HCT116 (cell line): ENCODE measurements at regions of chr11 and their contacts with region 1.

Region 1: GRCh38 chr11:66222358-66223149 is 45.9 kb upstream of the RAB1B start:
- DNase-seq: peak; percentile 88
- ATAC-seq: peak; percentile 96
- H3K4me3 ChIP-seq: no peak overlapping the region
- H3K27ac ChIP-seq: no peak overlapping the region
- H3K4me1 ChIP-seq: peaks cover 0 to 8% of the 10 kb centered on the region in 2 experiments; a peak in 1 of 4 replicates
- H3K27me3 ChIP-seq: no peaks in the 10 kb centered on the region
- CTCF ChIP-seq: peak; percentile 99 to 100 (median 100)
- POLR2A ChIP-seq: no peak
- RAD21 ChIP-seq: peak; percentile 95

Region 2: GRCh38 chr11:66051766-66052663 is 170.5 kb before region 1 on chr11 and contains the start of gene SF3B2:
- CTCF ChIA-PET with region 1: no interaction called
- POLR2A ChIA-PET with region 1: no interaction called
- RAD21 ChIA-PET with region 1: no interaction called
- intact Hi-C with region 1: no loop called
- DNase-seq: peak; percentile 96
- ATAC-seq: peak; percentile 99
- H3K4me3 ChIP-seq: peak within 1 kb of the TSS; percentile 79 to 100
- H3K27ac ChIP-seq: peak within 1 kb of the TSS; percentile 83
- H3K4me1 ChIP-seq: peaks cover 21% of the 10 kb centered on the region in 2 experiments
- H3K27me3 ChIP-seq: no peaks in the 10 kb centered on the region
- CTCF ChIP-seq: no peak
- POLR2A ChIP-seq: peak; percentile 22
- RAD21 ChIP-seq: no peak
- total RNA-seq, gene SF3B2: 300 TPM

Region 3: GRCh38 chr11:66258473-66258893 is 35.9 kb after region 1 on chr11:
- CTCF ChIA-PET with region 1: interaction called, 3 read pairs
- POLR2A ChIA-PET with region 1: no interaction called
- RAD21 ChIA-PET with region 1: no interaction called
- intact Hi-C with region 1: loop called (anchors 2 kb)
- DNase-seq: no peak
- ATAC-seq: peak; percentile 10
- H3K4me3 ChIP-seq: peak overlapping the region; percentile 94
- H3K27ac ChIP-seq: peak overlapping the region; percentile 68
- H3K4me1 ChIP-seq: peaks cover 10 to 20% of the 10 kb centered on the region in 2 experiments
- H3K27me3 ChIP-seq: no peaks in the 10 kb centered on the region
- CTCF ChIP-seq: no peak
- POLR2A ChIP-seq: no peak
- RAD21 ChIP-seq: no peak

Region 4: GRCh38 chr11:66275396-66275795 is 52.8 kb after region 1 on chr11:
- CTCF ChIA-PET with region 1: no interaction called
- POLR2A ChIA-PET with region 1: no interaction called
- RAD21 ChIA-PET with region 1: no interaction called
- intact Hi-C with region 1: no loop called
- DNase-seq: no peak
- ATAC-seq: no peak
- H3K4me3 ChIP-seq: no peak overlapping the region
- H3K27ac ChIP-seq: no peak overlapping the region
- H3K4me1 ChIP-seq: no peaks in the 10 kb centered on the region; a peak in 1 of 4 replicates
- H3K27me3 ChIP-seq: no peaks in the 10 kb centered on the region
- CTCF ChIP-seq: no peak
- POLR2A ChIP-seq: no peak
- RAD21 ChIP-seq: no peak

Region 5: DNA sequence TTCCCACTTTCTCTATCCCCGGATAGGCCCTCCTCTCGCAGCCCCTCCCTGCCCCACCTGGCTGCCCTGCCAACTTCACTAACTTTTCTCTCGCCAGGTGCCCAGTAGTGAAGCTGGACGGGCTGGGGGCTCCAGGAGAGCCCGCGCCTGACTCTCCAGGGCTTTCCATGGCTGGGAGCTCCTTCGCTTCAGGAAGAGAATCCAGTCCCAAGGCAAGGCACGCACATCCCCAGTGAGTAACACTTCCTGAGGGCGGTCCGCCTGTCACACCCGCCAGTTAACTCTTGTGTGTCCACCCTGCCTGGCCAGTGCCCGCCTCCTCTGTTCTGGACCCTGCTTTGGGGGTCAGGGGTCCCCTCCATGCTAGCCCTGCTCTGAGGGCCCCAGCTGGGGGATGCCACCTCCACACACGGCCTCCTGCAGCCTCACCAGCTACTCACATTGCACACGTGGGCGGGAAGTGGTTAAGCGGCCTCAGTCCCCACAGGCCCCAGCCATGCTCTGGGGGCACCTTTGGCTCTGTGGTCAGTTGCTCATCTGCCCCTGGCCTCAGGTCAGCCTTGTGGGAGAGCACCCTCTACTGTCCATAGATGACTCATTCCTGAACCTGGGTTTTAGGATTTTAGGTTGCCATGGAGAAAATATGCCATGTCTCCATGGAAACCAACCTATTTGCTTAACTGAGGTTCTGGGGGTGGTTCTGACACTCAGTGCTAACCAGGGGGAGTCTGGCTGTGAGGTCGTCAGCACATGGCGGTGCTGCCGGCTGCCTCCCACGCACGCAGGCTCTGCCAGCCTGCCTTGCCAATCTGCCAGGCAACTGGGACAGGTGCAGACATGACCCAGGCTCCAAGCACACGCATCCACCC is 113.9 kb after region 1 on chr11 and contains the start of gene RIN1:
- CTCF ChIA-PET with region 1: no interaction called
- POLR2A ChIA-PET with region 1: no interaction called
- RAD21 ChIA-PET with region 1: no interaction called
- intact Hi-C with region 1: loop called (anchors 2 kb)
- DNase-seq: peak; percentile 82
- ATAC-seq: peak; percentile 82
- H3K4me3 ChIP-seq: peak within 1 kb of the TSS; percentile 70 to 77
- H3K27ac ChIP-seq: peak within 1 kb of the TSS; percentile 89
- H3K4me1 ChIP-seq: peaks cover 16 to 36% of the 10 kb centered on the region in 2 experiments
- H3K27me3 ChIP-seq: no peaks in the 10 kb centered on the region
- CTCF ChIP-seq: peak in 2 of 3 experiments; percentile 5 to 24; a peak in 2 of 6 replicates
- POLR2A ChIP-seq: peak; percentile 56
- RAD21 ChIP-seq: no peak
- total RNA-seq, gene RIN1: 38.7 TPM